Activated CD4-positive, alpha-beta T cell treated with anti-CD3 and anti-CD28 coated beads, Interleukin-2, amount 10 ng/mL, durations not matched to agents 7 days and 5 days (primary cell): ENCODE measurements at regions of chr11 and their contacts with region 1.

Region 1: GRCh38 chr11:122853971-122854446 is 15.7 kb downstream of the CRTAM start:
- DNase-seq: peak; percentile 77
- H3K4me3 Mint-ChIP-seq: no peak overlapping the region
- H3K27ac Mint-ChIP-seq: no peak overlapping the region
- H3K4me1 Mint-ChIP-seq: peaks cover 32% of the 10 kb centered on the region
- H3K27me3 Mint-ChIP-seq: peaks cover 6% of the 10 kb centered on the region

Region 2: GRCh38 chr11:122293296-122294023 is 560.5 kb before region 1 on chr11:
- CTCF ChIA-PET with region 1: no interaction called
- POLR2A ChIA-PET with region 1: no interaction called
- DNase-seq: no peak
- H3K4me3 Mint-ChIP-seq: no peak overlapping the region
- H3K27ac Mint-ChIP-seq: no peak overlapping the region
- H3K4me1 Mint-ChIP-seq: no peaks in the 10 kb centered on the region
- H3K27me3 Mint-ChIP-seq: no peaks in the 10 kb centered on the region

Region 3: GRCh38 chr11:122593473-122594420 is 260.3 kb before region 1 on chr11:
- CTCF ChIA-PET with region 1: interaction called, 10 read pairs
- POLR2A ChIA-PET with region 1: no interaction called
- DNase-seq: no peak
- H3K4me3 Mint-ChIP-seq: no peak overlapping the region
- H3K27ac Mint-ChIP-seq: no peak overlapping the region
- H3K4me1 Mint-ChIP-seq: no peaks in the 10 kb centered on the region
- H3K27me3 Mint-ChIP-seq: peaks cover 20% of the 10 kb centered on the region

Region 4: GRCh38 chr11:122681735-122682134 is 172.3 kb before region 1 on chr11:
- CTCF ChIA-PET with region 1: no interaction called
- POLR2A ChIA-PET with region 1: no interaction called
- DNase-seq: no peak
- H3K4me3 Mint-ChIP-seq: no peak overlapping the region
- H3K27ac Mint-ChIP-seq: no peak overlapping the region
- H3K4me1 Mint-ChIP-seq: peaks cover 14% of the 10 kb centered on the region
- H3K27me3 Mint-ChIP-seq: no peaks in the 10 kb centered on the region

Region 5: GRCh38 chr11:122765487-122766131 is 88.4 kb before region 1 on chr11:
- CTCF ChIA-PET with region 1: no interaction called
- POLR2A ChIA-PET with region 1: no interaction called
- DNase-seq: no peak
- H3K4me3 Mint-ChIP-seq: no peak overlapping the region
- H3K27ac Mint-ChIP-seq: no peak overlapping the region
- H3K4me1 Mint-ChIP-seq: no peaks in the 10 kb centered on the region
- H3K27me3 Mint-ChIP-seq: no peaks in the 10 kb centered on the region

Region 6: DNA sequence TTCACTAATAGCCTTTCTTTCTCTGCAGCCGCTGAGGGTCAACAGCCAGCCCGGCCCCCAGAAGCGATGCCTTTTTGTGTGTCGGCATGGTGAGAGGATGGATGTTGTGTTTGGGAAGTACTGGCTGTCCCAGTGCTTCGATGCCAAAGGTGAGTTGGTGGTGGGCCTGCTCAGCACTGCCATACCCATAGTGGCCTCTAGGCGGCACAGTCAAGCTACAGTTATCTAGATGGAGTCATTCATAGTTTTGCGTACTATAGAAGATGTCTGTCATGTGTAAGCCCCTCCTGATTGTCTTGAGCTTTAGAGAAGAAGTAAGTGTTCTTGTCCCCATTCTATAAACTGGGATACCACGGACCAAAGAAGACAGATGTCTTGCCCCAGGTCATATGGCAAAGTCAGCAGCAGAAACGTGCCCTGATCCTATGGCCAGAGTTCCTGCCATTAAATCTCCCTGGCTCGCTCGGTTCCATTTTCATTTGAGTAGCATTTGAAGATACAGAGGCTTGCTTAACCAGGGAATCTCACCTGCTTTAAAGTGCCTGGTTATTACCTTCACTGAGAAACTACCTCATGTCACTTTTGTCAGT is 57.8 kb before region 1 on chr11:
- CTCF ChIA-PET with region 1: interaction called, 10 read pairs
- POLR2A ChIA-PET with region 1: no interaction called
- DNase-seq: peak; percentile 67
- H3K4me3 Mint-ChIP-seq: no peak overlapping the region
- H3K27ac Mint-ChIP-seq: no peak overlapping the region
- H3K4me1 Mint-ChIP-seq: no peaks in the 10 kb centered on the region
- H3K27me3 Mint-ChIP-seq: no peaks in the 10 kb centered on the region

Region 7: DNA sequence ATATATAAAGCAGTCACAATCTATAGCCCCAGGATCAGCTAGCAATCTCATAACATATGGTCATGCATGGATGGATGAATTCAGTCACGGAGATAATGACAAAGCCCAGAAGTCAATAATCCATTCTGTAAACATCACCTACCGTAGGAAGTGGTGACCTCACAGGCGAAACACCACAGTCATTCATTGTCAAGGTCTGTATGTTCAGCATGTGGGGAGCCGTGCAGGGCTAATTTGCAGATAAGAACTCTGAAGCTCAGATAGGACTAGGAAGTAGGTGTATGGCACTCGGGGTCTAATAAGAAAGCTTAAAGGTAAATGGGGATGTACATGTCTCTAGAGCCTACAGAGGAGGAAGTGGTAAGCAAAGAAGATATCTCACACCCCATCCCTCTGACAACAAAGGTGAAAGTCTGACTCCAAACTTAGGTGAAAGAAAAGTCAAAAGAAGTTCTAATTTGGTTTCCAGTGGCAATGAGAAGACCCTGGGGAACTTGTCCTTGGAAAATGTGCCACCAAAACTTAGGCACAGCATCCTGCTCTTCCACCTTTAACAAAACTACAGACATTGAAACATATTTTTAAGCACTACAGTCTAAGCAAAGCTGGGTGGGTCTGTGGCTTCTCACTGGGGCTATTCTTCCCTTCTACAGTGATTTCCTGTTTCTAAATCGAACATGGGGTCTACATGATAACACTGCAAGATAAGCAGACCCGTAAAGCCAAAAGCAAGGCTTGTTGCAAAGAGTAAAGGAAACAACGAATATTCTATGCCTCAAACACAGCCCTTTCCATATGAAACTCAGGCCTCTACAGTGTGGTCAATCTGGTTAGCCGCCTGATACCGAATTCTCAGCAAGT is 10.5 kb before region 1 on chr11:
- CTCF ChIA-PET with region 1: interaction called, 10 read pairs
- POLR2A ChIA-PET with region 1: interaction called, 4 read pairs
- DNase-seq: peak; percentile 55
- H3K4me3 Mint-ChIP-seq: peak overlapping the region; percentile 26
- H3K27ac Mint-ChIP-seq: peak overlapping the region; percentile 85
- H3K4me1 Mint-ChIP-seq: peaks cover 33% of the 10 kb centered on the region
- H3K27me3 Mint-ChIP-seq: peaks cover 2% of the 10 kb centered on the region

Region 8: DNA sequence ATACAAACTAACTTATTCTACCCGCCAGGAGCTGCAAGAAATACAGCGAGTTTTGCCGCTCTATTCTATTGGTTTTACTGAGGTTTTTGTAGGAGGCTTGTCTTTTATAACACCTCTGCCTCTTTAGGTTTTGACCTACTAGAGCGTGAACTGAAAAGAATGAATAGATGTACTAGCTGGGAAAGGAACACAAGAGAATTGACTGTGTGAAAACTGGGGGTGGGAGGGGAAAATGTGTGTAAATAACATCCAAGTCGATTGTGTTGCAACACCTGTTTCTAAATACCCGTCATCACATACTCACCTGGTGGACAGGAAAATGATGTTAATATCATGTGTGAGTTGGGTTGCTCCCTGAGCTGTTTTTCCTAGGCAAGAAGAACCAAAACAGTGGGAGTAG is 15.6 kb after region 1 on chr11:
- CTCF ChIA-PET with region 1: interaction called, 13 read pairs
- POLR2A ChIA-PET with region 1: no interaction called
- DNase-seq: no peak
- H3K4me3 Mint-ChIP-seq: no peak overlapping the region
- H3K27ac Mint-ChIP-seq: no peak overlapping the region
- H3K4me1 Mint-ChIP-seq: no peaks in the 10 kb centered on the region
- H3K27me3 Mint-ChIP-seq: no peaks in the 10 kb centered on the region